Activated T-helper 1 cell treated with anti-CD3 and anti-CD28 coated beads, Interleukin-12 subunit alpha, Interleukin-12 subunit beta, Interleukin-2, Interleukin-4 antibody, amounts not matched to agents 30 ng/mL and 10 ng/mL and 1 ng/mL, durations not matched to agents 14 hours and 24 hours and 36 hours (primary cell): ENCODE measurements at regions of chr6 and their contacts with region 1.

Region 1: GRCh38 chr6:137165375-137166246 is 7.8 kb downstream of the IL22RA2 start:
- DNase-seq: peak; percentile 59
- H3K4me3 Mint-ChIP-seq: peak overlapping the region; percentile 30
- H3K27ac Mint-ChIP-seq: peak overlapping the region; percentile 64
- H3K4me1 Mint-ChIP-seq: peaks cover 59% of the 10 kb centered on the region
- H3K27me3 Mint-ChIP-seq: no peaks in the 10 kb centered on the region

Region 2: DNA sequence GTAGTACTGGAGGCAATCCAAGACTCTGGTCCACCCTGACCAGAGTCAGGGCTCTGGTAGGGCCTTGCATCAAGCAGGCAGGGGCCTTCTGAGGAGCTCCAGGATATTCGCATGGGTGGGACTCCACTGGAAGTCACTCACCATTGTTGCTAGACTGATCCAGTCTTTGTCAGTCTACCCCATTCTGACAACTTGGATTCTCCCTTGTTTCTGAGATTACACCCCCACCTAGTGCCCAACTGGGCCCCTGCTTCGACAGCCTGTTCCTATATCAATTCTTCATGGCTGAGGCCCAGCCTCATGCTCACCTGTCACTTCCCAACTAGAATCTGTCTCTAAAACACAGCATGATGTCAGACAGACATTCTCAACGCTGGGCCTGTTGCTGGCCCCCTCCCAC is 238.3 kb before region 1 on chr6:
- intact Hi-C with region 1: no loop called
- DNase-seq: no peak
- H3K4me3 Mint-ChIP-seq: no peak overlapping the region
- H3K27ac Mint-ChIP-seq: no peak overlapping the region
- H3K4me1 Mint-ChIP-seq: no peaks in the 10 kb centered on the region
- H3K27me3 Mint-ChIP-seq: peaks cover 42% of the 10 kb centered on the region

Region 3: DNA sequence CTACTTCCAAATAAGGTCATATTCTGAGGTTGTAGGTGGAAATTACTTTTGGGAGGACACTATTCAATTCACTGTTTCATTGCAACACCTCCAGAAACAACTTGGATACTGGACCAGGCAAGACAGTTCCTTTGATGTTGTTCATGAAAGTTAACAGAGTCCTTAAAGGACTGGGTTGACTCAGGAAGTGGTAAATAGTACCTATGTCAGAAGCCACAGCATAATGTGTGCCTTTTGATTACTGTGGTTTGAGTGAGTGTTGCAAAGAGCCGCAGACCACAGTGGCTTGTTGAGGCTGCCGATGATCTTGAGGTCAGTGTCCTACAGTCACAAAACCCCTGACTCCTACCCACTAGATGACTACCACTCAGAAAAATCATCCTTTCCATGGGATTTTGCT is 131.8 kb before region 1 on chr6:
- intact Hi-C with region 1: loop called (anchors 1 kb)
- DNase-seq: peak; percentile 61
- H3K4me3 Mint-ChIP-seq: no peak overlapping the region
- H3K27ac Mint-ChIP-seq: peak overlapping the region; percentile 20
- H3K4me1 Mint-ChIP-seq: peaks cover 19% of the 10 kb centered on the region
- H3K27me3 Mint-ChIP-seq: peaks cover 54% of the 10 kb centered on the region

Region 4: DNA sequence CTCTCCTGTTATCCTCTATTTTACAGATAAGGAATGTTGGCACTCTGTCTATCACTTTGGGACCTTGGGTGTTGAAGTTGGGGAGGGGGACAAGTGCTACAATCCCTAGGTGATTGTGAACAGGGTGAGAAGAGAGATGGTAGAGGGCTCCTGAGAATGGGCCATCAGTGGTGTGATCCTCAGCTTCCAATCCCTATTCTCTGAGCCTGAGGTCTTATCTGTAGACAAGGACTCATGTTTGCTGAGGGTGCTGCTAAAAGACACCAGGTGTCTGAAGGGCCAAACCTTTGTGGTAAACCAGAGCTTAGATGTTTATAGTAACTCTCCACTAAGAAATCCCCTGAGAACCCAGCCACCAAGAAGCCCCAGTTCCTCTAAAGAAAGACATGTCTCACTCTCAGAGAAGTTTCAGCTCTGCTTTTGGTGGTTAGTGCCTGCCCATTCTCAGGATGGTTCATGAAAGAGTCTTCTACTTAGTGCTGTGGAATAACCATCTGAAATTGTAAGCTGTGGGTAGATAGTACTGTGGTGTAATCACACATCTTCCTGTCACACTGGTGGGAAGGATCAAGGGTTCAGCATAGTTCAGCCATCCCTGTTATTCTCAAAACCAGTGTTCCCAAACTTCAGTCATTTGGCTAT is 62.6 kb before region 1 on chr6:
- intact Hi-C with region 1: loop called (anchors 1 kb)
- DNase-seq: peak; percentile 57
- H3K4me3 Mint-ChIP-seq: peak overlapping the region; percentile 43
- H3K27ac Mint-ChIP-seq: peak overlapping the region; percentile 79
- H3K4me1 Mint-ChIP-seq: peaks cover 56% of the 10 kb centered on the region
- H3K27me3 Mint-ChIP-seq: no peaks in the 10 kb centered on the region

Region 5: GRCh38 chr6:137233911-137234863 is 68.6 kb after region 1 on chr6:
- intact Hi-C with region 1: loop called (anchors 5 kb)
- DNase-seq: peak; percentile 12
- H3K4me3 Mint-ChIP-seq: peak overlapping the region; percentile 25
- H3K27ac Mint-ChIP-seq: peak overlapping the region; percentile 50
- H3K4me1 Mint-ChIP-seq: peaks cover 59% of the 10 kb centered on the region
- H3K27me3 Mint-ChIP-seq: peaks cover 8% of the 10 kb centered on the region